PC-9 (cell line): ENCODE measurements at regions of chr11 and their contacts with region 1.

Region 1: GRCh38 chr11:72307439-72307838 is 63.5 kb upstream of the PHOX2A start:
- DNase-seq: no peak
- H3K4me3 ChIP-seq: no peak overlapping the region
- H3K27ac ChIP-seq: no peak overlapping the region
- H3K4me1 ChIP-seq: no peaks in the 10 kb centered on the region
- H3K27me3 ChIP-seq: no peaks in the 10 kb centered on the region
- CTCF ChIP-seq: no peak

Region 2: GRCh38 chr11:72287293-72287692 is 20.1 kb before region 1 on chr11:
- CTCF ChIA-PET with region 1: interaction called, 11 read pairs
- POLR2A ChIA-PET with region 1: no interaction called
- intact Hi-C with region 1: no loop called
- DNase-seq: no peak
- H3K4me3 ChIP-seq: no peak overlapping the region
- H3K27ac ChIP-seq: no peak overlapping the region
- H3K4me1 ChIP-seq: no peaks in the 10 kb centered on the region
- H3K27me3 ChIP-seq: peaks cover 5% of the 10 kb centered on the region; the same call in 1 of the 2 replicates
- CTCF ChIP-seq: no peak

Region 3: DNA sequence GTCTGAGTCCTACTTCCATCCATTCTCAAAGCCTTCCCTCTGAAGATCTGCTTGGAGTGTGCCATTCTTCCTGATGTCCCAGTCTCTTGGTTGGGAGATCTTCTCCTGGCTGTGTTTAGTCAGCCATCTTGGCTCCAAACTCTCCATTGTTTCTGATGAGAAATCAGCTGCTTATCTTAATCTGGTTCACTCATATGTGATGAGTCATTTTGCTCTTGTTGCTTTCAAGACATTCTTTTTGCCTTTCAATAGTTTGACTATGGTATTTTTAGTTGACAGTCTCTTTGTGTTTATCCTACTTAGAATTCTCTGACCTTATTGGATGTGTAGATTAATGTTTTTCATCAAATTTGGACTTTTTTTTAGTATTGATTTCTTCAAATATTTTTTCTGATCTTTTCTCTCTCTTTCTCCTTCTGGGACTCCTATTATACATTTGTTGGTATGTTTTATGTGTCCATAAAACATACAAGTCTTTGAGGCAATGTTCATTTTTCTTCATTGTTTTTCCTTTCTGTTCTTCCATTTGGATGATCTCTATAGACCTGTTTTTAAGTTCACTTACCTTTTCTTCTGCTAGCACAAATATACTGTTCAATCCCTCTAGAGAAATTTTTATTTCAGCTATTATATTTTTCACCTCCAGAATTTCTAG is 204.1 kb after region 1 on chr11:
- CTCF ChIA-PET with region 1: no interaction called
- POLR2A ChIA-PET with region 1: no interaction called
- intact Hi-C with region 1: no loop called
- DNase-seq: no peak
- H3K4me3 ChIP-seq: no peak overlapping the region
- H3K27ac ChIP-seq: no peak overlapping the region
- H3K4me1 ChIP-seq: no peaks in the 10 kb centered on the region
- H3K27me3 ChIP-seq: 0 out of 2 replicates have a peak, but pooled peaks cover 8% of the 10 kb centered on the region
- CTCF ChIP-seq: no peak